HepG2 (cell line): ENCODE measurements at regions of chr5 and their contacts with region 1.

Region 1: GRCh38 chr5:81165493-81166119 is 67.5 kb upstream of the CKMT2 start:
- DNase-seq: peak; percentile 67
- ATAC-seq: peak; percentile 97
- H3K4me3 ChIP-seq: no peak overlapping the region
- H3K27ac ChIP-seq: no peak overlapping the region
- H3K4me1 ChIP-seq: no peaks in the 10 kb centered on the region
- H3K27me3 ChIP-seq: no peaks in the 10 kb centered on the region
- CTCF ChIP-seq: peak; percentile 82
- EP300 ChIP-seq: no peak
- POLR2A ChIP-seq: no peak
- RAD21 ChIP-seq: peak; percentile 57; the same call in 1 of the 2 replicates

Region 2: DNA sequence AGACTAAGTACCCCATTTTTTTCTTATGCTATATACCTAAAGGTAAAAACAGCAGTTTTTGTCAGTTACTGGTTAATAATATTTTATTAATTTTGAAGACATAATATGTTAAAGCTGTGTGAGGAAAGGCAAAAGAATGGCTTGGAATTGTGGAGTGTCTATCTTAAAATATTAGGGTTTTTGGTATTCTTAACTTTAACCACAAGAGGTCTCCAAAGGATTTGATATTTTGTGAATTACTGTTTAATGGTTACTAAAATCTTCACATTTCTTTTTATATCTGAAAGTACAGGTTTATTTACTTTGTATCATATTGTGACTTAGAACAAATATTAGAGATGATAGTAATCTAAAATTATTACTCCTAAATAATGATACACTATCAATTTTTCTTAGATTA is 478.8 kb before region 1 on chr5:
- CTCF ChIA-PET with region 1: interaction called, 3 read pairs
- POLR2A ChIA-PET with region 1: no interaction called
- in situ Hi-C with region 1: no loop called
- intact Hi-C with region 1: loop called (anchors 2 kb)
- DNase-seq: peak; percentile 6
- ATAC-seq: no peak
- H3K4me3 ChIP-seq: no peak overlapping the region
- H3K27ac ChIP-seq: no peak overlapping the region
- H3K4me1 ChIP-seq: no peaks in the 10 kb centered on the region
- H3K27me3 ChIP-seq: no peaks in the 10 kb centered on the region
- CTCF ChIP-seq: no peak
- EP300 ChIP-seq: no peak
- POLR2A ChIP-seq: no peak
- RAD21 ChIP-seq: no peak

Region 3: GRCh38 chr5:80935811-80936385 is 229.7 kb before region 1 on chr5:
- CTCF ChIA-PET with region 1: no interaction called
- POLR2A ChIA-PET with region 1: no interaction called
- in situ Hi-C with region 1: no loop called
- intact Hi-C with region 1: loop called (anchors 1 kb)
- DNase-seq: peak; percentile 16
- ATAC-seq: peak; percentile 79
- H3K4me3 ChIP-seq: no peak overlapping the region
- H3K27ac ChIP-seq: no peak overlapping the region
- H3K4me1 ChIP-seq: no peaks in the 10 kb centered on the region
- H3K27me3 ChIP-seq: no peaks in the 10 kb centered on the region
- CTCF ChIP-seq: peak; percentile 56
- EP300 ChIP-seq: no peak
- POLR2A ChIP-seq: no peak
- RAD21 ChIP-seq: peak; percentile 23; the same call in 1 of the 2 replicates